Adrenal gland (tissue), 19 donors: ENCODE measurements at regions of chr6 and their contacts with region 1.

Region 1: DNA sequence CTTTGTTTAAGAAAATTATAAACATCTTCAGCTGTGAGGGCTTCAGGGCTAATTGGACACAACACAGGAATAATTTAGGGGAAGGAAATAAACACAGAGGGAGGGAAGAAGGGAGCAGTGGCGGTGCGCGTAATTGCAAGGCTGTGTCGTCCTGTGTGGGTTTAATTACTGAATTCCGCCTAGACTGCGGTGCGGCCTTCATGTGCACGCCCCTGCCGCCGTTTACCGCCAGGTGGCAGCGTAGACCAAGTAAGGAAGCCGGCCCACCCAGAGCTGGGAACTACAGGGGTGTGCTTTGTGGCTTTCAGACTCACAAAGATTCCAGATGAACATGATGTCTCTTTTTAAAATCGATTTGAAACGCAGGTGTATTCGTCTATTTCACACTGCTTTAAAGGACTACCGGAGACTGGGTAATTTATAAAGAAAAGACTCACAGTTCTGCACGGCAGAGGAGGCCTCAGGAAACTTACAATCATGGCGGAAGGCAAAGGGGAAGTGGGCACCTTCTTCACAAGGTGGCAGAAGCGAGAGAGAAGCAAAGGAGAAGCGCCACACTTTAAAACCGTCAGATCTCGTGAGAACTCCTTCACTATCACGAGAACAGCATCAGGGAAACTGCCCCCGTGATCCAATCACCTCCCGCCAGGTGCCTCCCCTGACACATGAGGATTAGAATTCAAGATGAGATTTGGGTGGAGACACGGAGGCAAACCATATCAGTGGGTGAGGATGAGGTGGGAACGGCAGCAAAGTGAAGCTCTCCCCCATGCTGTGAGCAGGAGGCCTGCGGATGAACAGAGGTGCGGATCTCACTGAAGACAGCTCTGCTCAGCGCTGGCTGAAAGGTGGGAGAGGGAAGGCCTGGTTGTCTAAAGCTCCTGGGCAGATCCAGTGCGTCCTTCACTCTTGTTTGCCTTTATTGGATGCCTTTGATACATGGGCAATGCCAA is 222.0 kb upstream of the PDE10A start:
- DNase-seq: peak; percentile 60 to 91 (median 83)
- H3K4me3 ChIP-seq: no peak overlapping the region
- H3K27ac ChIP-seq: no peak overlapping the region
- H3K4me1 ChIP-seq: no peaks in the 10 kb centered on the region
- H3K27me3 ChIP-seq: no peaks in the 10 kb centered on the region
- CTCF ChIP-seq: peak; percentile 80 to 91 (median 88)
- POLR2A ChIP-seq: no peak

Region 2: DNA sequence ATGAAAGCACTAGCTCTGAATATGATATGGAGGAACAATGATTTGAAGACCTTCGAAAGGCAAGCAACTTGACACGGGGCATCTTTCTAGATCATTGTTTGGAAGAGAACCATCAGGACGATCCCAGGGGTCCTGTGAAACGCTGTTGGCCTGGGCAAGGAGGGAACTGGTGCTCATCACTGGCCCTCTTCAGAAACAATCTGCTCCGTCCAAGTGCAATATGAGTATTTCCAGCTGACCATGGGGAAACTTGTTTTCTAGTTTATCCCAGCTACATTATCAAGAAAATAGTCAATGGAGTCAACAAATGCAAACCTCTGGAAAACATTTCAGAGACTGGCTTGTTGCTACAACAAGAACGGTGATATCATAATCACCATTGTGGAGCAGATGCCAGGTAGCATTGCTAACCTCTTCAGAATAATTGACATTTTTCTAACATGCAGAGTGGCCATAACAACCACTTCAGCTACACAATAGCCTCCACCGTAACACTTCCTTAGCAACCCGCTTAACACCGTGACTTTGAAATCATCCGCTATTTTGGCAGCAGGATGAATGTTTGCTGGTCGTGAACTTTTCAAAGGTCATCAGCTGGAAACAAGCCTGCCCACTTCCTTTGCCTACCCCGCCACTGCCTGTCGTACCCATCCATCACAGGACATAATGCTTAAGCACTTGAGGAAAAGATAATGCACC is 110.0 kb before region 1 on chr6:
- intact Hi-C with region 1: no loop called
- DNase-seq: peak in 4 of 7 donors; percentile 13 to 62 (median 22)
- H3K4me3 ChIP-seq: no peak overlapping the region
- H3K27ac ChIP-seq: no peak overlapping the region
- H3K4me1 ChIP-seq: no peaks in the 10 kb centered on the region
- H3K27me3 ChIP-seq: no peaks in the 10 kb centered on the region
- CTCF ChIP-seq: no peak
- POLR2A ChIP-seq: no peak

Region 3: GRCh38 chr6:166105341-166106075 is 220.4 kb after region 1 on chr6:
- intact Hi-C with region 1: loop called (anchors 2 to 5 kb)
- DNase-seq: no peak
- H3K4me3 ChIP-seq: no peak overlapping the region
- H3K27ac ChIP-seq: no peak overlapping the region
- H3K4me1 ChIP-seq: no peaks in the 10 kb centered on the region
- H3K27me3 ChIP-seq: no peaks in the 10 kb centered on the region
- CTCF ChIP-seq: no peak
- POLR2A ChIP-seq: no peak